ENCODE measurements at regions of chr17 and their contacts with region 1.

Region 1: DNA sequence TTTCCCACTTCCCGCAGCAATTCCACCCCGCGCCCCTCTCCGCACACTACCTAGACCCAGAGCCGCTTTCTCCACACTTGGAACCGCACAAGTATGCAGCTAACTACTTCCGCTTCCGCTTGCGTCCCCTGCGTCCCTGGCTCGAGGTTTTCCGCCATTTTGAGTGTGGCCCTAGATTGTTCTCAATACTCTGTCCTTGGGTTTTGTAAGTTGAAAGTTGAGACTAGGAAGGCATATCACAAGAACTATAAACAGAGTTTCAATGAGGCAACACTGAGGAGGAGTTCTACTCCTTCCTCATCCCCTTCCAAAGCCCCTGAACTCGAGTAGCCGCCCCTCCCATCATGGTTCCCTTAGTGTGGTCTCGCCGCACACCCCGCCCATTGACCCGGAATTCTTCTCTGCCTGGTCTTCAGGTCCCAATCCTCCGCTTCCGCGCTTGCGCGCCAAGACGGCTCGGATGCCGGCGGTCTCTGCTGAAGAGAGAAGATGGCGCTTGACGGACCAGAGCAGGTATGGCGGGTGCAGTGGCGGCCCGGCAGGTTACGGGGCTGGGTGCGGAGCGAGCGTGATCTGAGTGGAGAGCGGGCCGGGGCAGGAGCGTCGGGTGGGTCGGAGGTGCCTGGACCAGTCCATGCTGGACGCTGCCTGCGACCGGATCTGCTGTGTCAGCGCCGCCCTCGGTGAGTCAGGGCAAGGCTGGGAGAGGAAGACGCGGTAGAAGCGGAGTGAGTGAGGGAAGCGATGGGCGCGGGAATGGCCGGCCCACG is at the starts of genes FTSJ3 and PSMC5:
- DNase-seq: no peak
- H3K4me3 ChIP-seq: peak within 1 kb of the TSS; percentile 84
- CTCF ChIP-seq: peak; percentile 75

Region 2: DNA sequence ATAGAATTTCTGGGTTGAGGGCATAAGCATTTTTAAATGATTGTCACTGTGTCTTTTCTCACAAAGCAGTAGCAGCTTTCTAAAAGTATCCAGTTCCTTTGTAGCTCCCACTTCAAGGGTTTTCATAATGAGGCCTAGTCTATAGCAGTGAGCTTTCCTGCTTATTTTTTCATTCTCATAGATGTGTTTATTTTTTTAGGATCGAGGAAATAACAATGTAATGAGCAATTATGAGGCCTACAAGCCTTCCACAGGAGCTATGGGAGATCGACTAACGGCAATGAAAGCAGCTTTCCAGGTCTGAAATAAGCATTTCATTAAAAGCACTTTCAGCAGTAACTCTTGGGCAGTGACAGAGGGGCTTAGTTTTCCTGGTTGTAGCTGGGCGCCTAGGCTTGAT is 10.5 kb before region 1 on chr17:
- CTCF ChIA-PET with region 1: interaction called, 6 read pairs
- POLR2A ChIA-PET with region 1: interaction called, 13 read pairs
- DNase-seq: no peak
- H3K4me3 ChIP-seq: no peak overlapping the region
- CTCF ChIP-seq: no peak

Region 3: DNA sequence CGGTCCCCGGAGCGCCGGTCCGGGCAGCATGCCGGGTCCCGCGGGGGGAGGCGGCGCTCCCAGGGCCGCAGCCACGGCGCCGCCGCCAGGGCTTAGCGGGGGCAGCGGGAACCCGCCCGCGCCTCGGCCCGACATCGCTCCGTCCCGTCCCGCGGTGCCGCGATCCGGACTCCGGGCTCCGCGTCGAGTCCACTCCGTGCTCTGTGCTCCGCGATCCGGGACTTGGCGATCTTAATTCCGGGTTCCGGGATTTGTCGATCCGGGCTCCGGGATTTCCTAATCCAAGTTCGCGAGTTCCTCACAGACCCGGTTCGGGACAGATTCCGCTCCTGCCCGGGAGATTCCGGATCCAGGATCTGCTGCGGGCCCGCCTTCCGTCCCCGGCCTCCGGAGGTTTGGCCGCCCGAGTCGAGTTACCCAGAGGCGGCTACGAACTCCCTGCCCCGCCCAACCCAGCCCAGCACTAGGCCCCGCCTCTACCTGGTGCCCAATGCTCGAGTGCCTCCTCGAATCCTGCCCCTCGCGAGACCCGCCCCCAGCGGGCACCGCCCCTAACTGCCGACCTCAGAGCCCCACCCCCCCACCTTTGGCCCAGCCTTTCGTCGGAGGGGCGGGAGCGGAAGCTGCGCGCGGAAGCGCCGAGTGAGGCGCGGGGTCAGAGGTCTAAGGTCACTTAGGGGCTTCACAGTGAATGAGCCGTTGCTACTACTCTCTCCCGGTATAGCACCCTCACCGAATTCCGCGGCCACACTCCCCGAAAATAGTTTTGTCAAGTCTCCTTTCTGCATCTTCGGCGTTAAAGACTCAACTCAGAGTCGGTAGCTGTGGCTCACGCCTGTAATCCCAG is 15.6 kb after region 1 on chr17 and contains the start of gene SMARCD2:
- CTCF ChIA-PET with region 1: interaction called, 58 read pairs
- POLR2A ChIA-PET with region 1: interaction called, 8 read pairs
- DNase-seq: peak; percentile 93
- H3K4me3 ChIP-seq: peak within 1 kb of the TSS; percentile 82
- CTCF ChIP-seq: no peak

Region 4: GRCh38 chr17:63904316-63904715 is 77.1 kb after region 1 on chr17:
- CTCF ChIA-PET with region 1: no interaction called
- POLR2A ChIA-PET with region 1: no interaction called
- DNase-seq: no peak
- H3K4me3 ChIP-seq: no peak overlapping the region
- CTCF ChIP-seq: no peak